ENCODE measurements at regions of chr3 and their contacts with region 1.

Region 1: GRCh38 chr3:57951066-57951882 is 56.9 kb upstream of the FLNB start:
- DNase-seq: peak; percentile 64 to 85
- ATAC-seq: peak; percentile 90 to 96 (median 95)
- H3K4me3 ChIP-seq: no peak overlapping the region
- H3K27ac ChIP-seq: peak overlapping the region; percentile 79 to 97 (median 93)
- H3K4me1 ChIP-seq: peaks cover 3 to 51% (median 42%) of the 10 kb centered on the region in 9 donors
- H3K27me3 ChIP-seq: no peaks in the 10 kb centered on the region
- CTCF ChIP-seq: no peak

Region 2: DNA sequence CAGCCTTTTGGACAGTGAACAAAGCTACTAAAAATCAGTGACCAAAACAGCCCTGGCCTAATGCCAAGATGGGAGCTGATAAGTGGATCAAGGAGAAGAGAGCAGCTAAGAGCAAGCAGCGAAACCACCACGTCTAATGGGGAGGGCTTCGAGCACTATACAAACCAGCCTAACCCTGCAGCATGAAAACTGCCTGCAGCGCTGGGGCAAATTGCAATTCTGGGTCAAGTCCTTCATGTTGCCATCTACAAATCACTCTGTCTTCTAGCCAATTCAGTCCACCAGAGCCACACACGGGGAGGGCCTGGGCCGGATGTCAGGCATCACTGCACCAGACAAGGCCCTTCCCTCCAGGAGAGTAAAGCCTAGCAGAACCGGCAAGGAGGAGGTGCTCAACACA is 921.4 kb before region 1 on chr3:
- intact Hi-C with region 1: no loop called
- DNase-seq: no peak
- ATAC-seq: no peak
- H3K4me3 ChIP-seq: no peak overlapping the region
- H3K27ac ChIP-seq: no peak overlapping the region
- H3K4me1 ChIP-seq: no peaks in the 10 kb centered on the region
- H3K27me3 ChIP-seq: no peaks in the 10 kb centered on the region
- CTCF ChIP-seq: no peak

Region 3: GRCh38 chr3:58167431-58168351 is 216.4 kb after region 1 on chr3:
- intact Hi-C with region 1: loop called in 2 of 10 experiments (anchors 5 to 10 kb)
- DNase-seq: peak; percentile 72 to 79
- ATAC-seq: peak; percentile 70 to 84 (median 81)
- H3K4me3 ChIP-seq: no peak overlapping the region
- H3K27ac ChIP-seq: peak overlapping the region; percentile 28 to 91 (median 72)
- H3K4me1 ChIP-seq: peaks cover 7 to 55% (median 32%) of the 10 kb centered on the region in 9 donors
- H3K27me3 ChIP-seq: no peaks in the 10 kb centered on the region
- CTCF ChIP-seq: peak; percentile 64 to 94 (median 88)

Measured in heart right ventricle (tissue), 16 donors.